Natural killer cell (primary cell): ENCODE measurements at regions of chr15 and their contacts with region 1.

Region 1: DNA sequence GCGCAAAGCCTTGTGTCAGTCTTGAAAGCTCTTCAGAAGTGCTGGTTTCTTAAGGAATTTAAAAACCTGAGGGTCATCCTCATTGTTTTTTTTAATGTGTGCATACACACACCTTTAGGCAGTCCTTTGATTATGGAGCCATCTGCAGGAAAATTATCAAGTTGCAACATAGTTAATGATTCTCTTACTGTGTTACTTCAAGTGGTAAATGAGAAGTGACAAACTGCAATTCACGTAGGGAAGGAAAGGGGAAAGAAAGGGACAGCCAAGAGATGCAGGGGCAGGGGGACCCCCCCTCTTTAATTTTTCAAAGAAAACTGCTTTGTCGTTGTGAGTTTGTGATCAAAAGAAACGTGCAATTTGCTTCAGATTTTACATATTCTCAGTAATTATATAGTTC is 162.4 kb upstream of the CGNL1 start:
- DNase-seq: peak in 1 of 2 donors; percentile 43
- ATAC-seq: peak in 1 of 3 donors; percentile 60
- H3K4me3 ChIP-seq: no peak overlapping the region
- H3K4me3 Mint-ChIP-seq: no peak overlapping the region
- H3K27ac ChIP-seq: no peak overlapping the region
- H3K27ac Mint-ChIP-seq: no peak overlapping the region
- H3K4me1 ChIP-seq: no peaks in the 10 kb centered on the region
- H3K4me1 Mint-ChIP-seq: peaks cover 23 to 37% of the 10 kb centered on the region in 2 donors
- H3K27me3 ChIP-seq: no peaks in the 10 kb centered on the region
- H3K27me3 Mint-ChIP-seq: no peaks in the 10 kb centered on the region
- CTCF ChIP-seq: peak; percentile 42

Region 2: DNA sequence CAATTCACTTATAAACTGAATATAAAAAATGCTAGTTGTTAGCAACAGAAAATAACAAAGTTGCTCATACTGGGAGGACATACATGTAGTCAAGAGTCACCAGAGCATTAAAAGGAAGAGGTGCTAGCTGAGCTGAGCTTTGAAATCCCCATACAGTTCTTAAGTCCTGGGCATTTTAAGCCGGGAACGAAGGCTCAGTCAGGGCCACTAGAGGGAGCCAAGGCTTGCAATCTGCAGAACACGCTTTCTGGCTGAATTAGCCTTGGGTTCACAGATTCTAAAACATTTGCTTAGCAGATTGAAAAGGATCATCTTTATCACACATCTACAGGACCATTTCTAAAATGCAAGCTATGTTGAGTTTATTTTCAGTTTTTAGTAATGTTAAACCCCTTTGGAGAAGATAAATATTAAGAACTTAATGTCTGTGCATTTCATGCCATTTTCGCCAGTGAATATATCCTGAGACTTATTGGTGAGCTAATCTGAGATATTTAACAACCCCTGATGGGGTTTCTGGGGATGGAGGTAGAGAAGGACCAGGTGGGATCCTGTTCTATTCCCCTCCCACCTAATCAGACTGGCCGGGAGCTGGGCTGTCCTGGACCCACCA is 722.6 kb before region 1 on chr15:
- intact Hi-C with region 1: loop called (anchors 10 kb)
- DNase-seq: peak in 1 of 2 donors; percentile 73
- ATAC-seq: peak in 2 of 3 donors; percentile 47 to 66
- H3K4me3 ChIP-seq: no peak overlapping the region
- H3K4me3 Mint-ChIP-seq: no peak overlapping the region
- H3K27ac ChIP-seq: no peak overlapping the region
- H3K27ac Mint-ChIP-seq: no peak overlapping the region
- H3K4me1 ChIP-seq: no peaks in the 10 kb centered on the region
- H3K4me1 Mint-ChIP-seq: no peaks in the 10 kb centered on the region
- H3K27me3 ChIP-seq: no peaks in the 10 kb centered on the region
- H3K27me3 Mint-ChIP-seq: peaks cover 6 to 8% of the 10 kb centered on the region in 2 donors
- CTCF ChIP-seq: peak; percentile 69

Region 3: GRCh38 chr15:56654624-56655023 is 559.2 kb before region 1 on chr15:
- intact Hi-C with region 1: no loop called
- DNase-seq: no peak
- ATAC-seq: no peak
- H3K4me3 ChIP-seq: no peak overlapping the region
- H3K4me3 Mint-ChIP-seq: no peak overlapping the region
- H3K27ac ChIP-seq: no peak overlapping the region
- H3K27ac Mint-ChIP-seq: no peak overlapping the region
- H3K4me1 ChIP-seq: no peaks in the 10 kb centered on the region
- H3K4me1 Mint-ChIP-seq: peaks cover 7% of the 10 kb centered on the region in 2 donors
- H3K27me3 ChIP-seq: no peaks in the 10 kb centered on the region
- H3K27me3 Mint-ChIP-seq: no peaks in the 10 kb centered on the region
- CTCF ChIP-seq: no peak

Region 4: DNA sequence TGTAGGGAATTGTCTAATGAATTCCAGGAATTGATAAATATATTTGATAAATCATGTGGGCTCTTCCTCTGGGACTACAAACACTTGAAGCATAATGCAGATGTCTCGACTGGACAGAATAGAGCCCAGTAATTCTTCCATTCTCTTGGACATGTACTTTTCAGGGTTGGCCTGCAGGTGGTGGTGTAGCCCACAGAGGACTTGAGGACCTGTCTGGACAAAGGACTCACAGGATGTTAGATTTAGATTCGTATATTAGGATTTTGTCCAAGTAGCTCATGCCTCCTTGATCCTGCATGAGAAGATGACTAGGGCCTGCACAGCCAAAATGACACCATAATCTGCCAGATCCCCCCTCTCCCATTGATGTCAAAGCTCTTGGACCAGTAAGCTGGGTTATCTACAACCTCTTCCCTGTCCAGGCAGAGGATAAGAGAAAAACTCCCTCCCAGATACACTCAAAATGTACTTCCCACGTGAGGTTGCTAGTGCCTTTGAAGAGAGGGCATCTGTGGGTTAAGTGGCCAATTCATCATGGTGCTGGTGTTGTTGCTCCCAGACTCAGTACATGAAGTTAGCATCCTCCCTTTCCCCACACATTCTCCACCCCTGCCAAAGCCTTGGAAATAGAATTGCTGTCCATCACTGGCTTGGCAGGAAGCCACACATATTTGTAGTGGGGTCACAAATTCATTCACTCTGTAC is 392.0 kb before region 1 on chr15:
- intact Hi-C with region 1: loop called (anchors 5 kb)
- DNase-seq: peak; percentile 41 to 61
- ATAC-seq: peak; percentile 76 to 85 (median 78)
- H3K4me3 ChIP-seq: no peak overlapping the region
- H3K4me3 Mint-ChIP-seq: no peak overlapping the region
- H3K27ac ChIP-seq: no peak overlapping the region
- H3K27ac Mint-ChIP-seq: no peak overlapping the region
- H3K4me1 ChIP-seq: no peaks in the 10 kb centered on the region
- H3K4me1 Mint-ChIP-seq: no peaks in the 10 kb centered on the region
- H3K27me3 ChIP-seq: no peaks in the 10 kb centered on the region
- H3K27me3 Mint-ChIP-seq: peaks cover 0 to 2% of the 10 kb centered on the region in 2 donors
- CTCF ChIP-seq: peak; percentile 78

Region 5: GRCh38 chr15:57284535-57284934 is 70.7 kb after region 1 on chr15:
- intact Hi-C with region 1: no loop called
- DNase-seq: no peak
- ATAC-seq: no peak
- H3K4me3 ChIP-seq: no peak overlapping the region
- H3K4me3 Mint-ChIP-seq: no peak overlapping the region
- H3K27ac ChIP-seq: peak overlapping the region; percentile 80
- H3K27ac Mint-ChIP-seq: peak overlapping the region in 1 of 2 donors; percentile 4
- H3K4me1 ChIP-seq: peaks cover 2% of the 10 kb centered on the region
- H3K4me1 Mint-ChIP-seq: peaks cover 0 to 6% of the 10 kb centered on the region in 2 donors
- H3K27me3 ChIP-seq: no peaks in the 10 kb centered on the region
- H3K27me3 Mint-ChIP-seq: no peaks in the 10 kb centered on the region
- CTCF ChIP-seq: no peak